Naive thymus-derived CD8-positive, alpha-beta T cell (primary cell): ENCODE measurements at regions of chr18 and their contacts with region 1.

Region 1: DNA sequence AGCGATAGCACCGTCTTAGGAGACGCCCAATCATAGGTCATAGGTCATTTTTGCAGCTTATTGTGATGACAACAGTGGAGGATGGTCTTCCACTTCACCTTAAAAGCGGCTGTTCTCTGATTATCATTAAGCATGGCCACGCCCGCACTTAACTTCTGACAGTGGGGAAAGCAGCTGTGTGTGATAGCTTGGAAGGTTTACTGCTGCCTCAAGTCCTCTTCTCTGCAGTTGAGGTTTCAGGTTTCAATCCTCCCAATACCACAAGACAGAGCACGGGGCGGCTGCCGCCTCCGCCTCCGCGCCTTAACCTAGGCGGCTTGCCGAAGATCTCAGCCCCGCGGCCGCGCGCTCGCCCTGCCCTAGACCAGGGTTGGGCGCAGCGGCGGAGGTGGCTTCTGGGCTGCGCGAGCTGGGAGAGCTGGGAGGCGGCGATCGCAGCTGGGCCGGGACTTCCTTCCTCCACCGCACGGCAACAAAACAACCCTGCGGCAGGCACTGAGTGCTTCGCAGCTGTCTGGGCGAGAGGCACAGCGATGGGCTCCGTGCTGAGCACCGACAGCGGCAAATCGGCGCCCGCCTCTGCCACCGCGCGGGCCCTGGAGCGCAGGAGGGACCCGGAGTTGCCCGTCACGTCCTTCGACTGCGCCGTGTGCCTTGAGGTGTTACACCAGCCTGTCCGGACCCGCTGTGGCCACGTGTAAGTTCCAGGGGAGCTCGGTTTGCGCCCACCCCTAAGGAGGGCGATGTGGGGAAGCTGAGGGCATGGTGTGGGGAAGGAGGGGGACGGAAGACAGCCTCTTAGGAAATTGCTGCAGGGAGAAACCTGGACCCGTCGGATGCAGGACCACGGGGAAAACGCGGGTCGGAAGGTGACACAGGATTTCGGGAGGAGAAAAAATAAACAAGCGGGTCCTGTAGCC is at the start of gene RNF125:
- DNase-seq: peak; percentile 79 to 97 (median 92)
- ATAC-seq: peak; percentile 70 to 77
- H3K4me3 Mint-ChIP-seq: peak within 1 kb of the TSS; percentile 78 to 100 (median 94)
- H3K27ac Mint-ChIP-seq: peak within 1 kb of the TSS; percentile 88 to 100 (median 97)
- H3K4me1 Mint-ChIP-seq: peaks cover 24 to 76% (median 56%) of the 10 kb centered on the region in 4 donors
- H3K27me3 Mint-ChIP-seq: no peaks in the 10 kb centered on the region
- polyA plus RNA-seq, gene RNF125: 49.1 to 62.1 (median 60.9) TPM

Region 2: GRCh38 chr18:32029558-32029957 is 11.0 kb after region 1 on chr18:
- POLR2A ChIA-PET with region 1: interaction called, 34 read pairs
- DNase-seq: no peak
- ATAC-seq: peak; percentile 23 to 36
- H3K4me3 Mint-ChIP-seq: peak overlapping the region in 9 of 10 donors; percentile 5 to 71 (median 53)
- H3K27ac Mint-ChIP-seq: peak overlapping the region in 8 of 10 donors; percentile 4 to 80 (median 57)
- H3K4me1 Mint-ChIP-seq: peaks cover 24 to 88% (median 72%) of the 10 kb centered on the region in 4 donors
- H3K27me3 Mint-ChIP-seq: peaks cover 0 to 2% (median 0%) of the 10 kb centered on the region in 5 donors

Region 3: DNA sequence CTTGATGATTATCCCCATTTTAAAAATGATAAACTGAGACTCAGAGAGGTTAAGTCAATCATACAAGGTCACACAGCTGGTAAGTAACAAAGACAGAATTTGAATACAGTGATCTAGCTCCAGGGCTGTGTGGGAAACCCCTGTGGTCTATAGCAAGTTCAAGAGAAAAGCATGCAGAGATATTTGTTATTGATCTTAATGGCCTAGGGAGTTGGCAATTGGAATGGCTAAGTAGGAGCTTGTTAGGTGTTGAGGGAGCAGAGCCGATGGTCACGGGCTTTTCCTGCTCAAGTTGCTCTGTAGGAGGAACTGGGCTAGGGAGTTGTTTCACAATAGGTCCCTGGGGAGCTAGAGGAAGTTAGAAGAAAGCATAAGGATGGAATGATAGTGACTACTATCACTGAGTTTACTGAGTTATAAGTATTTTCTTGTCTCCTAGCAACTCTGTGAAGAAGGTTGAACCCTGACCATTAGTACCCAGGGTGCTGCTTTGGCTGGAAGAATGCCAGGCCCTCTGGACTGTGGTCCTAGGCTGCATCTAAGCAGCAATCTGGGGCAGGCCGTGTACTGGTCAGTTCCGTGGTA is 30.0 kb after region 1 on chr18:
- POLR2A ChIA-PET with region 1: interaction called, 73 read pairs
- DNase-seq: no peak
- ATAC-seq: peak; percentile 41 to 60
- H3K4me3 Mint-ChIP-seq: peak overlapping the region in 9 of 10 donors; percentile 6 to 77 (median 33)
- H3K27ac Mint-ChIP-seq: peak overlapping the region; percentile 21 to 91 (median 68)
- H3K4me1 Mint-ChIP-seq: peaks cover 15 to 46% (median 32%) of the 10 kb centered on the region in 4 donors
- H3K27me3 Mint-ChIP-seq: no peaks in the 10 kb centered on the region

Region 4: DNA sequence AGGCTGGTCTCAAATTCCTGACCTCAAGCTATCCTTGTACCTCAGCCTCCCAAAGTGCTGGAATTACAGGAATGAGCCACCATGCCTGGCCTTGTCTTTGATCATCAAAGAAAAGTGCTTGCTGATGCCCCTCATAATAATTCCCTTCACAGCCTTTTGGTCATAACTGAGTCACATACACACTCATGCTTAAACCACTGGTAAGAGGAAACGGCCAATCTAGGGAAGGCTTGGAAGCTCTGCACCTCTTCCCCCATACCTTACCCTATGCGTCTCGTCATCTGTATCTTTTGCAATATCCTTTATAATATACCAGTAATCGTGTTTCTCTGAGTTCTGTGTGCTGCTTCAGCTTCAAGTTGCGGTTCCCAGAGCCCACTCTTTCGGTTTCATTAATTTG is 68.3 kb after region 1 on chr18:
- POLR2A ChIA-PET with region 1: interaction called, 135 read pairs
- DNase-seq: no peak
- ATAC-seq: no peak
- H3K4me3 Mint-ChIP-seq: peak overlapping the region in 3 of 10 donors; percentile 1 to 50 (median 8)
- H3K27ac Mint-ChIP-seq: peak overlapping the region in 5 of 10 donors; percentile 34 to 70 (median 68)
- H3K4me1 Mint-ChIP-seq: peaks cover 16 to 50% (median 45%) of the 10 kb centered on the region in 4 donors
- H3K27me3 Mint-ChIP-seq: peaks cover 0 to 3% (median 0%) of the 10 kb centered on the region in 5 donors